GM10248 (cell line): ENCODE measurements at regions of chr16 and their contacts with region 1.

Region 1: GRCh38 chr16:9946022-9946720 is 236.1 kb downstream of the GRIN2A start:
- DNase-seq: no peak
- CTCF ChIP-seq: no peak

Region 2: DNA sequence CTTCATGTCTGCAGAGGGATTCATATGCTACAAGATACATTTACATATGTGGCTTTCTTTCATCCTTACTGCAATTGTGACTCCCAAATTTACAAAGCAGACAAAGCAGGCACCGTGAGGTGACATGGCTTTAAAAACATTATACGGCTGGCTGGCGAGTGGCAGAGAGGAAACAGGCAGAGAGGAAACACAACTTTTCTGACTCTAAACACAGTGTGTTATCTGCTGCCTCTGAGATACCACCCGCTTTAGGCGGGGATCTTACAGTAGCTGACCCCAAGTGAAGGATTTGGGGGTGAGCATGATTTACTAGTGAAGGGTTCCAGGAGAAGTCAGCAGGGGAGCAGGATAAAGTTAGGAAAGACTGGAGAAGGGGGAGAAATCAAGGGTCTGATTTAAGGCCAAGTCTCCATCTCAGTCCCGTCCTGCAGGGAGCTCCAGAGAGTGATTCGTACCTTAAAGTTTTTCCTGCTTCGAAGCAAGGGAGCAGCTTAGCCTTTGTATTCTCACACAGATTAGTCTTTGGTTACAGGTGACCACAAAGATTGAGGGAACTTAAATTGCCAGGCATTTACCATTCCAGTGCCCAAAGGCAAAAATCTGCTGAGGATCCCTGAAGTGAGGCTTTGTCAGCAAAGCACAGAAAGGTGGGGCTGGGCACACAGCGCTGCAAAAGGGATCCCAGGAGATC is 119.0 kb before region 1 on chr16:
- CTCF ChIA-PET with region 1: no interaction called
- POLR2A ChIA-PET with region 1: no interaction called
- DNase-seq: no peak
- CTCF ChIP-seq: no peak

Region 3: DNA sequence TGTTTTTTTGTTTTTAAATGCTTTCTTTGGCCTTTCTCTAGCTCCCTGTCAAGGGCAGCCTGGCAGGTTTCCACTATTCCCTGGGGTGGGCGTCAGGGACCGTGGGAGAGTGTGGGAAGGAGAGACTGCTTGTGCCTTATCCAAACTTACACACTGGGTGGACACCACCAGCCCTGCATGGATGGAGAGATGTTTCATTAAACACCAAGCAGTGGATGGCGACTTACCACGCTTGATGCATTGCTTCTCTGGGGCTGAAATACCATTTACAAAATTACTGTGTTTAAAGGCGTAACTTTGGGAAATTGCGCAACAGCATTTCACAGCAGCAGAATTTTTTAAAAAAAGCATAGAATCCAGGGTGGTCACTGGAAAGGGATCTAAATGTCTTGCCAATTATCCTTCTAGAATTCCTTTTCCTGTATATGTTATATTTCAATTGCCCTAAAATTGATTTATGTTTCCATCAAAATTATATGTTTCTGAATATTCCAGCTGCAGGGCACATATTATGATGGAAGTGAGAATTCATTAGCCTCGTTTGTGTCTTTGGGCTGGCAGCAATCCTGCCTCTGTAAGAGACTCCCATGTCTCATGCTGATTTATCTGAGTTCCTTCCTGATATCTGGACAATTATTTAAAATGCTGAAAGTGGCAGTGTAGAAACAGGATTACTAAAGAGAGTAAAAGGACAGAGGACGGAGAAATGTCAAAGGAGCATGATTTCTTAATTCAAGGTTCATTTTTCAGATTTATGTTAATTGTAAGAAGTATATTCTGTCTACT is 11.3 kb before region 1 on chr16:
- CTCF ChIA-PET with region 1: interaction called, 14 read pairs
- POLR2A ChIA-PET with region 1: no interaction called
- DNase-seq: no peak
- CTCF ChIP-seq: no peak